PC-9 (cell line): ENCODE measurements at regions of chr6 and their contacts with region 1.

Region 1: GRCh38 chr6:106870069-106870468 is 104.5 kb downstream of the CD24 start:
- DNase-seq: peak; percentile 60 to 99
- H3K4me3 ChIP-seq: no peak overlapping the region
- H3K27ac ChIP-seq: peak overlapping the region; percentile 74
- H3K4me1 ChIP-seq: peaks cover 43% of the 10 kb centered on the region
- H3K27me3 ChIP-seq: no peaks in the 10 kb centered on the region
- CTCF ChIP-seq: no peak

Region 2: GRCh38 chr6:106290954-106291353 is 579.1 kb before region 1 on chr6:
- CTCF ChIA-PET with region 1: no interaction called
- POLR2A ChIA-PET with region 1: no interaction called
- intact Hi-C with region 1: no loop called
- DNase-seq: no peak
- H3K4me3 ChIP-seq: no peak overlapping the region
- H3K27ac ChIP-seq: no peak overlapping the region
- H3K4me1 ChIP-seq: no peaks in the 10 kb centered on the region
- H3K27me3 ChIP-seq: no peaks in the 10 kb centered on the region
- CTCF ChIP-seq: no peak

Region 3: DNA sequence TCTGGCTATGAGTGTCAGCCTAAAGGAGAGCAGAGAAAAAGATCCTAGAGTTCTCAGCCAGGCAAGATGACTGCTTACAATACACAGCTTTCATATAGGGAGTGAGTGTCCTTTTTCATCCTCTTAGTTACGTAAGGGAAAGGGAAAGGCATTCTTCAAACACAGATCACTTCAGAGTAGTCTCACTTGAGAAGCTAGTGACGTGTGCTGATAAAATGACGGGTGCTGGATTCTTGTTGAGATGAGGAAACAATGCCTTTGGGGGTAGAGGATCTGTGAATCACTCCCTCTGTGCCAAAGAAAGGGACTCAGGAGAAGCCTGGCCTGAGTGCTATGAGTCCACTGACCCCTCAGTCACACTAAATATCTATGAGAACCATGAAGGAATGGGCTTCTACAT is 123.4 kb before region 1 on chr6:
- CTCF ChIA-PET with region 1: no interaction called
- POLR2A ChIA-PET with region 1: no interaction called
- intact Hi-C with region 1: loop called (anchors 1 kb)
- DNase-seq: peak; percentile 51 to 100
- H3K4me3 ChIP-seq: peak overlapping the region; percentile 12; the same call in 1 of the 2 replicates
- H3K27ac ChIP-seq: peak overlapping the region; percentile 98
- H3K4me1 ChIP-seq: peaks cover 62% of the 10 kb centered on the region
- H3K27me3 ChIP-seq: no peaks in the 10 kb centered on the region
- CTCF ChIP-seq: no peak

Region 4: GRCh38 chr6:106751501-106752252 is 118.4 kb before region 1 on chr6:
- CTCF ChIA-PET with region 1: no interaction called
- POLR2A ChIA-PET with region 1: no interaction called
- intact Hi-C with region 1: loop called (anchors 1 kb)
- DNase-seq: peak; percentile 85 to 95
- H3K4me3 ChIP-seq: no peak overlapping the region
- H3K27ac ChIP-seq: peak overlapping the region; percentile 73
- H3K4me1 ChIP-seq: peaks cover 44% of the 10 kb centered on the region
- H3K27me3 ChIP-seq: no peaks in the 10 kb centered on the region
- CTCF ChIP-seq: no peak

Region 5: DNA sequence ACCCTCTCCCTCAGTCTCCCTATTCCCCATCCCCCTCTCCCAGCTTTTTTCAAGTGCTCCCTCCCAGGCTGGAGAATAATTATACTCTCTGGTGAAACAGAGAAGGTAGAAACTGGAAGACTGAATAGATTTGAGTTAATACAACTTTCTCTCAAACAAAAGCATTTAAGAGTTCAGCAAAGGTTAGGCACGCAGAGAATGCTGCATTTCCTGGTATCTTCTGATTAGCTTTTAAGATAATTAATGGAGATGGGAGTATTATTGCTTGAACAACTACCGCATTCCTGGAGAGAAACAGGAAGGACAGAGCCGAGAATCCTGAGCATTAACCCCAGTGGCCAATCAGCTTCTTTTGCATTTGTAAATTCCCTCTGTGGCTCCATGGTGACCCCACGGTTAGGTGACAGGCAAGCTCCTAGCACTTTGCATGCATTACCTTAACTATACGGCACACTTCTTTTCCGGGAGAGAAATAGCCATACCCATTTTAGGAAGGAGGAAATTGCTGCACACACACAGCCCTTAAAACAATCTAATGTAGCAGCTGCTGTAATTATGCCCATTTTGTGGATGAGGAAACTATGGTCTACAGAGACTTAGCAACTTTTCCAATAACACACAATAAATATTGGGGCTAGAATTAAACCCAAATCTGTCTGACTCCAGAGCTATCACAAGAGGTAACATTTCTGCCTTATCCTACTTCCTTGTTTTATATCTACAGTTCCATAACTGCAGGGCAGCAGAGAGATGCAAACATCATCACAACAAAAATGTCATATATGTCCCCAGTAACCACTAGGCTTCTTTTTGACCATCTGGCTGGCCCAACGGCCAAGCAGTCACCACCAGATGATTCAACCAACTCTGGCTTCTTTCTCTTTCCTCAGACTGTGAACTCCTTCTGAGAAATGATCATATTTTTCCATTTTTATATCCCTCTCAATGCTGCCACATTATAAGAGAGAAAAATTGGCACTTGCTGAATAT is 65.4 kb before region 1 on chr6:
- CTCF ChIA-PET with region 1: no interaction called
- POLR2A ChIA-PET with region 1: interaction called, 8 read pairs
- intact Hi-C with region 1: loop called (anchors 1 kb)
- DNase-seq: peak; percentile 65 to 84
- H3K4me3 ChIP-seq: no peak overlapping the region
- H3K27ac ChIP-seq: peak overlapping the region; percentile 38
- H3K4me1 ChIP-seq: peaks cover 24% of the 10 kb centered on the region
- H3K27me3 ChIP-seq: no peaks in the 10 kb centered on the region
- CTCF ChIP-seq: no peak

Region 6: GRCh38 chr6:106820412-106820852 is 49.6 kb before region 1 on chr6:
- CTCF ChIA-PET with region 1: no interaction called
- POLR2A ChIA-PET with region 1: no interaction called
- intact Hi-C with region 1: loop called (anchors 2 kb)
- DNase-seq: peak; percentile 49 to 58
- H3K4me3 ChIP-seq: no peak overlapping the region
- H3K27ac ChIP-seq: no peak overlapping the region
- H3K4me1 ChIP-seq: no peaks in the 10 kb centered on the region; the same call in 1 of the 2 replicates
- H3K27me3 ChIP-seq: no peaks in the 10 kb centered on the region
- CTCF ChIP-seq: no peak

Region 7: DNA sequence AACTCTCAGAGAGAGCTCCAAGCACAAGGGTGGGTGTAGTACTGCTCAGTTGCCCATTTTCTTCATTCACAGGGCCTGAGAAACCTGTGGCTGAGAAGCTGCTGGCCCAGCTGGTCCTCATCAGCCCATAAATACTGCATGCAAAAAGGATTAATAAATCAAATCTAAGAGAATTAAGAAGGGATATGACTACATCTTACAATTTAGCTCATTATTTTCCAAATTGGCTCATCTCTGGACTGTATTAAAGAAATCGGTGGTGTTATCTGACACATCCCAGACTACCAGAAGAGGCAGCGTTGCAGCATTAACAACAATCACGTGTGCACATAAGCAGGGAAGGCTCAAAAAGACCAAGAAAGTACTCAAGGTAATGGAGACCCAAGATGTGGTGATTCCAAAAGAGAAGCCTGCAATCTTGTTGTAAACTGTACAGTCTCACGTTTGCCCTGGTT is 13.8 kb after region 1 on chr6:
- CTCF ChIA-PET with region 1: no interaction called
- POLR2A ChIA-PET with region 1: interaction called, 24 read pairs
- intact Hi-C with region 1: no loop called
- DNase-seq: no peak
- H3K4me3 ChIP-seq: no peak overlapping the region
- H3K27ac ChIP-seq: no peak overlapping the region
- H3K4me1 ChIP-seq: peaks cover 39% of the 10 kb centered on the region
- H3K27me3 ChIP-seq: no peaks in the 10 kb centered on the region
- CTCF ChIP-seq: peak; percentile 44

Region 8: GRCh38 chr6:106913676-106914280 is 43.7 kb after region 1 on chr6:
- CTCF ChIA-PET with region 1: no interaction called
- POLR2A ChIA-PET with region 1: no interaction called
- intact Hi-C with region 1: loop called (anchors 1 kb)
- DNase-seq: peak; percentile 43 to 98
- H3K4me3 ChIP-seq: no peak overlapping the region
- H3K27ac ChIP-seq: peak overlapping the region; percentile 98
- H3K4me1 ChIP-seq: peaks cover 46% of the 10 kb centered on the region
- H3K27me3 ChIP-seq: no peaks in the 10 kb centered on the region
- CTCF ChIP-seq: no peak

Region 9: DNA sequence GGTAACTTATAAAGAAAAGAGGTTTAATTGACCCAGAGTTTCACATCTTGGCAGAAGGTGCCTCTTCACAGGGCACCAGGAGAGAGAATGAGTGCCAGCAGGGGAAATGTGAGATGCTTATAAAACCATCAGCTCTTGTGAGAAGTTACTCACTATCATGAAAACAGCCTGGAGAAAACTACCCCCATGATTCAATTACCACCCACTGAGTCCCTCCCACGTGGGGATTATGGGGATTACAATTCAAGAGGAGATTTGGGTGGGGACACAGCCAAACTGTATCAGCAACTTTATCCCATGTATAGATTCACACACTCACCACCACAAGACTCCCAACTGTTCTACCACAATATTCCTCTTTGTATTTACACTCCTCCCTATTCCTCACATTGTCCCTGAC is 578.7 kb after region 1 on chr6:
- CTCF ChIA-PET with region 1: no interaction called
- POLR2A ChIA-PET with region 1: no interaction called
- intact Hi-C with region 1: no loop called
- DNase-seq: no peak
- H3K4me3 ChIP-seq: no peak overlapping the region
- H3K27ac ChIP-seq: no peak overlapping the region
- H3K4me1 ChIP-seq: peaks cover 14% of the 10 kb centered on the region
- H3K27me3 ChIP-seq: no peaks in the 10 kb centered on the region
- CTCF ChIP-seq: no peak